H1 (cell line): ENCODE measurements at regions of chr16 and their contacts with region 1.

Region 1: DNA sequence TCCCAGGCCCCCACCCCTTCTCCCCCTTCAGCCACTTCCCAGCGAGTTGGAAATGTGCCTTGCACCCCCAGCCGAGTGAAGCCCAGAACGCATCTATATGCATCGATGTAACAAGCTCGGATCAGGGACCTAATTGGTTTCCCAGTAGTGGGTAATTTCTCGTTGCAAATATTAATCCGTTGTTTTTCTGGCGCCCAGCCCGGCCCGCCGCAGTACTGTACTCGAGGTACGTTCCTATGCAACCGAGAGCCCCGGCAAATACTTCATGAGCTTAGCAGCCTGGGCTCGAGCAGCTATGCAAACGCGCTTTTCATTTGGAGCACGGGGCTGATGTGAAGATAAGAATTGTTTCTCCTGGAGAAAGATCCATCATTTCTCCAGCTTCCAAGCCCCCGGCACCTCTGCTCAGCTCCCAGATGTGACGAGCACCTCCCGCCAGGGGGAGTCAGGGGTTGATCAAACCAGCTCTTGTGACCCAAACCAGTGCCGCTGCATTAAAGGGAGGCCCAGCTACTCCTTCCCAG is 229.8 kb downstream of the KATNIP start:
- DNase-seq: peak; percentile 41 to 88
- H3K4me3 ChIP-seq: no peak overlapping the region
- H3K27ac ChIP-seq: no peak overlapping the region
- H3K4me1 ChIP-seq: 0 out of 7 replicates have a peak, but pooled peaks cover 0 to 5% (median under 1%) of the 10 kb centered on the region in 4 experiments
- H3K27me3 ChIP-seq: no peaks in the 10 kb centered on the region
- CTCF ChIP-seq: peak; percentile 70 to 88 (median 81)
- EP300 ChIP-seq: no peak
- POLR2A ChIP-seq: no peak
- RAD21 ChIP-seq: peak; percentile 76 to 84

Region 2: DNA sequence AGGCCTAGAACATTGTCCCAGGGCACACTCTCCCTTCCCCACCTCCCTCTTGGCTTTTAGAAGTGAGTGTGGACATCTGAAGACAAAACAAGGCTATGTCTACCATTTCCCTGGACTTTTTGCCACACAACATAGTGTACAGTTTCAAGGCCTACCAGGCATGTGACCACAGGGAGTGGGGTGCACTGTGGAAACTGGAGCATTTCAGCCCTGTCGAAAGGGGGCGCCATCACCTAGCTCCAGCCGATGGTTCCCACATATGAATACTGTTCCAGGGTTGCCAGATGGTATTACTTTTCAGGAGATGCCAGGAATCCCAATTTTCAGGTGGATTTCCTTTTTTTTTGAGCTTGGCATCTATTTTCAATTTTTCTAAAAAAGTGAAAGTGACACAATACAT is 89.1 kb before region 1 on chr16:
- CTCF ChIA-PET with region 1: interaction called, 15 read pairs
- POLR2A ChIA-PET with region 1: no interaction called
- DNase-seq: peak in 1 of 2 experiments; percentile 77
- H3K4me3 ChIP-seq: no peak overlapping the region
- H3K27ac ChIP-seq: no peak overlapping the region
- H3K4me1 ChIP-seq: no peaks in the 10 kb centered on the region
- H3K27me3 ChIP-seq: no peaks in the 10 kb centered on the region
- CTCF ChIP-seq: peak; percentile 69 to 94 (median 94)
- EP300 ChIP-seq: no peak
- POLR2A ChIP-seq: no peak
- RAD21 ChIP-seq: peak; percentile 83

Region 3: GRCh38 chr16:27790546-27791403 is 11.1 kb after region 1 on chr16:
- CTCF ChIA-PET with region 1: interaction called, 19 read pairs
- POLR2A ChIA-PET with region 1: interaction called, 4 read pairs
- DNase-seq: no peak
- H3K4me3 ChIP-seq: no peak overlapping the region
- H3K27ac ChIP-seq: no peak overlapping the region
- H3K4me1 ChIP-seq: no peaks in the 10 kb centered on the region
- H3K27me3 ChIP-seq: no peaks in the 10 kb centered on the region
- CTCF ChIP-seq: no peak
- EP300 ChIP-seq: no peak
- POLR2A ChIP-seq: no peak
- RAD21 ChIP-seq: no peak

Region 4: GRCh38 chr16:27847030-27847550 is 67.4 kb after region 1 on chr16:
- CTCF ChIA-PET with region 1: interaction called, 12 read pairs
- POLR2A ChIA-PET with region 1: no interaction called
- DNase-seq: no peak
- H3K4me3 ChIP-seq: no peak overlapping the region
- H3K27ac ChIP-seq: no peak overlapping the region
- H3K4me1 ChIP-seq: peaks cover 0 to 3% (median 1%) of the 10 kb centered on the region in 4 experiments; a peak in 3 of 7 replicates
- H3K27me3 ChIP-seq: no peaks in the 10 kb centered on the region
- CTCF ChIP-seq: no peak
- EP300 ChIP-seq: no peak
- POLR2A ChIP-seq: no peak
- RAD21 ChIP-seq: no peak

Region 5: DNA sequence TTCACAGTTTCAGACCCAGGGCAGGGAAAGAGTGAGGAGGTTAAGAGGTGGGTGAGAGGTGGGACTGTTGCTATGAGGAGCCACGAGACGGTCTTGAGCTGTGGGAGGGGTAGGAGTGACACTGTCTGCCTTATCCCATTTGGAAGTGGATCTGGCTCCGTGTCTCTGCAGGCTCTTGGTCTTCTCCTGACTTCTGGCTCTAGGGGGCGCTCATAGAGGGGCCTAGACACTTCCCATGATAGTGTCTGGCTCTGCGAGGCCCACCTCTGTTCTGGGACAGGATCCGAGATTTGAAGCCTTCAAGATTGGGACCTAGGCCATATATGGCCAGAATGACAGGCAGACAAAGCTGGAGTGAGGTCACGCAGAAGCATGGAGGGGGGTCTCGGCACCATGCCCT is 79.3 kb after region 1 on chr16:
- CTCF ChIA-PET with region 1: interaction called, 158 read pairs
- POLR2A ChIA-PET with region 1: no interaction called
- DNase-seq: peak in 1 of 2 experiments; percentile 71
- H3K4me3 ChIP-seq: no peak overlapping the region
- H3K27ac ChIP-seq: no peak overlapping the region
- H3K4me1 ChIP-seq: no peaks in the 10 kb centered on the region
- H3K27me3 ChIP-seq: no peaks in the 10 kb centered on the region
- CTCF ChIP-seq: peak; percentile 38 to 76 (median 64)
- EP300 ChIP-seq: no peak
- POLR2A ChIP-seq: no peak
- RAD21 ChIP-seq: peak; percentile 39 to 56; a peak in 3 of 4 replicates

Region 6: DNA sequence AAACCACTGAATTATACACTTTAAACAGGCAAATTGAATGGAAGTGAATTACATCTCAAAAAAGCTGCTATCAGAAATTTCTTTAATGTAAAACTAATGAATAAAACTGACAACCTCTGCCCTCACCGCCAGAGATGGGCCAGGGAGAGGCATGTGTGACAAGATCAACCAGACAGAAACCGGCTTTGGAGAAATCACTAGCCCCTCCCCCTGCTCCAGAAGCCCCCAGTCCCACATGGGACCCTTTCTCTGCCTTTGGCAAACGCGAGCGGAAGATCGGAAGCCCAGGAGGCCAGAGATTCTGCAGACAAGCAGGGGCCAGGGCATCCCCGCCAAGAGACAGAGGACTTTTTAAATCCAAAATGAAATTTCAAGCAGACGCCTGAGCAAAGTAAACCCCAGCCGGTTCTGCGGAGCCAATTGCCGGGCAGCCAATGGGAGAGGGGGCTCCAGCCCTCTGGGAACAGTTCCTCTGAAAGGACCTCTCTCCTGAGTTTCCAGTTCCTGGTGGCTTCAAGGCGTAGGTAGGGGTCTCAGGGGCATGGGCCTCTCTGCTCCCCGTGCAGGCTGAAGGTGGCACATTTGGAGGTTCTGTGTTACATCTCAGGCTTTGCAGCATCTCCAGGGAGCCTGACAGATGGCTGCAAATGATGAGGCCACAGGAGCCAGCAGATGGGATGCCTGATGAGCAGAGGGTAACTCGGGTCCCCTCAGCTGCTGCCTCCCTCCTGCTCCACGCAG is 165.7 kb after region 1 on chr16:
- CTCF ChIA-PET with region 1: no interaction called
- POLR2A ChIA-PET with region 1: no interaction called
- DNase-seq: peak in 1 of 2 experiments; percentile 51
- H3K4me3 ChIP-seq: peak overlapping the region in 1 of 4 experiments; percentile 27; a peak in 1 of 8 replicates
- H3K27ac ChIP-seq: no peak overlapping the region
- H3K4me1 ChIP-seq: no peaks in the 10 kb centered on the region
- H3K27me3 ChIP-seq: no peaks in the 10 kb centered on the region
- CTCF ChIP-seq: no peak
- EP300 ChIP-seq: no peak
- POLR2A ChIP-seq: no peak
- RAD21 ChIP-seq: no peak